Esophagus muscularis mucosa (tissue), 4 donors: ENCODE measurements at regions of chr7 and their contacts with region 1.

Region 1: GRCh38 chr7:100407285-100408180 is 21.0 kb downstream of the ZCWPW1 start:
- DNase-seq: no peak
- H3K4me3 ChIP-seq: no peak overlapping the region
- H3K27ac ChIP-seq: no peak overlapping the region
- H3K4me1 ChIP-seq: peaks cover 0 to 4% (median 0%) of the 10 kb centered on the region in 4 donors
- H3K27me3 ChIP-seq: no peaks in the 10 kb centered on the region
- CTCF ChIP-seq: peak; percentile 51 to 55 (median 53)
- EP300 ChIP-seq: no peak
- POLR2A ChIP-seq: no peak

Region 2: GRCh38 chr7:100358027-100358865 is 49.3 kb before region 1 on chr7 and contains the start of gene PILRB:
- intact Hi-C with region 1: loop called (anchors 5 kb)
- DNase-seq: no peak
- H3K4me3 ChIP-seq: no peak within 1 kb of the TSS
- H3K27ac ChIP-seq: no peak within 1 kb of the TSS
- H3K4me1 ChIP-seq: no peaks in the 10 kb centered on the region
- H3K27me3 ChIP-seq: no peaks in the 10 kb centered on the region
- CTCF ChIP-seq: no peak
- EP300 ChIP-seq: no peak
- POLR2A ChIP-seq: no peak
- total RNA-seq, gene PILRB: 13.5 to 33.6 (median 20.7) TPM

Region 3: DNA sequence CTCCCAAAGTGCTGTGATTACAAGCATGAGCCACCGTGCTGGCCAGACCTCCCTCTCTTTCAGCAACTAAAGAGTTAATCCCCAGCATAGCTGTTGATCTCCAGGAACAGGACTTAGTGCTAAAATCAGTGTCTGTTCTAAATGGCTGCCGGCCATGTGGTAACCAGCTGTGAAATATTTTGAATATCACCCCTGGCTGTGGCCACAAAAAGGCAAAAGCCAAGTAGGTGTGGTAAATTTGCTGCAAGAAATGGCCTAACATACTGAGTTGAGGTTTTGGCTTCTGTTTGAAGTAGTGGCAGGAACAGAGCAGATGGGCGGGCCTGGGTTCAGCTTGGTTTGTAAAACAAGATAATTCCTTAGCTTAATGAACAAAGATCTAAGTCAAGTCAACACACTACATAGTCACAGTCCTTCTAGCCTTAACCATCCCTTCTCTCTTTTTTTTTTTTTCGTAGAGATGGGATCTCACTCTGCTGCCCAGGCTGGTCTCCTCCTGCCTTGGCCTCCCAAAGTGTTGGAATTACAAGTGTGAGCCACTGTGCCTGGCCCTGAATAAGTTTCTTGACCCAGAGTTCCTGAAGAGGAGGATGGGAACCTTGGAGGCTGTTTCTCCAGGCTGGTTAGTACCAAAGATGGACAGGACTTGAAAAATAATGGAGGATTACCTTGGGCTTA is 108.7 kb after region 1 on chr7:
- intact Hi-C with region 1: no loop called
- DNase-seq: peak; percentile 93
- H3K4me3 ChIP-seq: no peak overlapping the region
- H3K27ac ChIP-seq: peak overlapping the region in 3 of 4 donors; percentile 16 to 51 (median 40)
- H3K4me1 ChIP-seq: peaks cover 0 to 16% (median 13%) of the 10 kb centered on the region in 4 donors
- H3K27me3 ChIP-seq: no peaks in the 10 kb centered on the region
- CTCF ChIP-seq: no peak
- EP300 ChIP-seq: no peak
- POLR2A ChIP-seq: no peak